Colonic mucosa (tissue), 4 donors: ENCODE measurements at regions of chr12 and their contacts with region 1.

Region 1: DNA sequence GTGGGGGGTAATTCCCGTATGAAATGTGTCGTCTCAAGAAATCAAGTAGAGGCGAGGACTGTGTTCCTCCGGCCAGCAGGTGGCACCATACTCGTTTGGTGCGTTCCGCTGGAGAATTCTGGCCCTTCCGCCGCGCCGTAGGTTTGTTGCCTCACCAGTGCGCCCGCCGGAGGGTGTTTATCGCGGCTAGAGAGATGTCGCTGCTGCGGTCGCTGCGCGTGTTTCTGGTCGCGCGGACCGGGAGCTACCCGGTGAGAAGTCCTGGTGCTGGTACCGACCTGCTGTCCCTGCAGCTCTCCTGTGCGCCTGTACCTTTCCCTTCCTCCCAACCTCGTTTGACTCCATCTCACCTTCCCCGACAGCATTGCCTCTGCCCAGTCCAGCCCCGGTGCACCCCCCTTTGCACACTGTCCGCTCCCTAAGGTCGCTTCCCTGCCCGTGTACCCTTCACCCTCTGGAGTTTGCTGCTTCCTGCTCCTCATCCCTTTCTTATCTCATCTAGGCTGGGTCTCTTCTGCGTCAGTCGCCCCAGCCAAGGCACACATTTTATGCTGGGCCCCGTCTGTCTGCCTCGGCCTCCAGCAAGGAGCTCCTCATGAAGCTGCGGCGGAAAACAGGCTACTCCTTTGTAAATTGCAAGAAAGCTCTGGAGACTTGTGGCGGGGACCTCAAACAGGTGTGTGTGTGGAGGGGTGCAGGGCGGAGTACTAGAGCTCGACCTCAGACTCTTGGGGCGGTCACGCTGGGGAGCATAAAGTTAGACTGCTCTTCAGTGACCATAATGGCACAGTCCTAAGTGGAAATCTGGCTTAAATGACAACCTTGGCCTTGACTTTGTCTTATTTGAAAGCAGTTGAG is at the start of gene TSFM:
- DNase-seq: peak; percentile 99
- H3K4me3 ChIP-seq: peak within 1 kb of the TSS; percentile 87
- H3K27ac ChIP-seq: no peak within 1 kb of the TSS
- H3K4me1 ChIP-seq: no peaks in the 10 kb centered on the region
- H3K27me3 ChIP-seq: no peaks in the 10 kb centered on the region
- CTCF ChIP-seq: peak; percentile 87
- total RNA-seq, gene TSFM: 35.6 to 68.9 TPM

Region 2: GRCh38 chr12:57832966-57833365 is 50.1 kb after region 1 on chr12:
- intact Hi-C with region 1: loop called (anchors 5 kb)
- DNase-seq: no peak
- H3K4me3 ChIP-seq: no peak overlapping the region
- H3K27ac ChIP-seq: no peak overlapping the region
- H3K4me1 ChIP-seq: peaks cover 59% of the 10 kb centered on the region
- H3K27me3 ChIP-seq: no peaks in the 10 kb centered on the region
- CTCF ChIP-seq: no peak

Region 3: DNA sequence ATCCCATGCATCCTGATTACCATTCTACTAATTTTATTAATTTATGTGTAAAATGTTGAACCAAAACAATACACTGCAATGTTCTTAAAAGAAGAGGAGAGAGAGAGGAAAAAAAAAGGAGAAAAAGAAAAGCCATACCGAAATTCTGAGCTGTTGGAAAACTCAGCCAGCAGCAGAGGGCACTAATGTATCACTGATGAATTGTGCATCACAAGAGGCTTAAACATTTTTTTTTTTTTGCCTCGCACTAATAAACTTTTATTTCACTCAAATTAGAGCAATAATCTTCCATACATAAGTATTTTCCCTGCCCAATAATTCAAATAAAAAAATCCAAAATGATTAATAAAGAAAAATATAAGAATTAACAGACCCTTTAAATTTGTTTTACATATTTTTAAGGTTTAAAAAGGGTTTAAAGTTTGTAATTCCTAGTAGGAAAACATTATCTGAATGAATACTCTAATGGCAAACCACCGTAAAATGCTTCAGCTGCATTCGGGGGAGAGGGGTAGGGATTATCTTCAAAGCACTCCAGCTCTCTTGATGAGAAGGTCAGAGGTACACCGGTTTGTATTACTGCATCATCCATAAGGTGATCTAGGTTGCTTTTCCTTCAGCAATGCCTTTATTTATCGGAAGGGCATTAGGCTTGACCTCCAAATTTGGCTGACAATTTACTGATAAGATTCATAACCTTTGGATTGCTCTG is 200.5 kb after region 1 on chr12:
- intact Hi-C with region 1: no loop called
- DNase-seq: peak; percentile 26
- H3K4me3 ChIP-seq: no peak overlapping the region
- H3K27ac ChIP-seq: no peak overlapping the region
- H3K4me1 ChIP-seq: no peaks in the 10 kb centered on the region
- H3K27me3 ChIP-seq: no peaks in the 10 kb centered on the region
- CTCF ChIP-seq: peak; percentile 57